ENCODE measurements at regions of chr12 and their contacts with region 1.

Region 1: GRCh38 chr12:96308881-96309280 is 91.4 kb downstream of the CDK17 start:
- DNase-seq: no peak
- ATAC-seq: no peak
- H3K4me3 ChIP-seq: no peak overlapping the region
- H3K4me3 Mint-ChIP-seq: no peak overlapping the region
- H3K27ac ChIP-seq: no peak overlapping the region
- H3K27ac Mint-ChIP-seq: no peak overlapping the region
- H3K4me1 ChIP-seq: peaks cover 2 to 5% of the 10 kb centered on the region in 2 experiments
- H3K4me1 Mint-ChIP-seq: peaks cover 18 to 31% (median 29%) of the 10 kb centered on the region in 3 donors
- H3K27me3 ChIP-seq: no peaks in the 10 kb centered on the region
- H3K27me3 Mint-ChIP-seq: no peaks in the 10 kb centered on the region

Region 2: DNA sequence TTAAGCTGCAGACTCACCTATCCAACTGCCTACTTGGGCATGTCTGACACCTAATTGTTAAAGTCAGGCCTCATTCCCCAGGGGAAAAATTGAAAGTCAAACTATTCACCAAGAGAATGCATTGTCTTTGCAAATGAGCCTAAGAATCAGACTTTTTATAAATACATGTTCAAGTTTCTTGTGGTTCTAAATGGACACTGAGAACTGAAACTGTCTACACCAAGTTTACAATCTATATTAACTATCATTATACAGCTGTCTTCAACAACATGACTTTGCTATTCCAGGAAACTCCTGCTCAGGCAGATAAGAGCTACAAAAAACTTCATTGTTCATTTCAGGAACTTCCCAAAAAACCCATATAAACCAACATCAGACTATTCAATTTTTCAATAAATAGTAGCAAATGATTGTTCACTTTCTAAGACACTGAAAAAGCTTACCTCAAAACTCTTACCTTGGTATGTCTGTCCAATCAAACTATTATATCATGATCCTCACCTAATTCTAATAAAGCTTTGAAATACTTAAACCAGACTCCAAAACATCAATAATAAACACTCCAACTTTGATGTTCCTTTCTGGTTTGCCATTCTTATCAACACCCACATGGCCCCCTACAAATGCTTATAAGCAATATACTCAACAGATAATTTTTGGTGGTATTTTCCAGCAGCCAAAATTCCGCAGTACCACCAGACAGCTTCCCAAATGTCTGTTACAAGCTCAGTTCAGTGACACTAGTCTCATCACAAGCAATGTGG is 67.1 kb after region 1 on chr12:
- CTCF ChIA-PET with region 1: interaction called in 1 of 2 experiments, 3 read pairs
- POLR2A ChIA-PET with region 1: interaction called, 4 to 12 read pairs
- DNase-seq: no peak
- ATAC-seq: no peak
- H3K4me3 ChIP-seq: no peak overlapping the region
- H3K4me3 Mint-ChIP-seq: peak overlapping the region in 2 of 3 donors; percentile 1 to 88
- H3K27ac ChIP-seq: peak overlapping the region; percentile 82
- H3K27ac Mint-ChIP-seq: peak overlapping the region; percentile 97 to 98
- H3K4me1 ChIP-seq: peaks cover 40 to 43% of the 10 kb centered on the region in 2 experiments
- H3K4me1 Mint-ChIP-seq: peaks cover 84 to 86% (median 85%) of the 10 kb centered on the region in 3 donors
- H3K27me3 ChIP-seq: no peaks in the 10 kb centered on the region
- H3K27me3 Mint-ChIP-seq: no peaks in the 10 kb centered on the region